Activated T-helper 2 cell treated with anti-CD3 and anti-CD28 coated beads, Interferon-gamma antibody, Interleukin-2, Interleukin-4, amounts not matched to agents 10 μg/mL and 5 μg/mL and 100 μg/mL, durations not matched to agents 14 hours and 24 hours and 36 hours (primary cell): ENCODE measurements at regions of chr10 and their contacts with region 1.

Region 1: GRCh38 chr10:102713814-102714620 is at the start of gene ARL3:
- DNase-seq: peak; percentile 96
- H3K4me3 Mint-ChIP-seq: peak within 1 kb of the TSS; percentile 92
- H3K27ac Mint-ChIP-seq: peak within 1 kb of the TSS; percentile 92
- H3K4me1 Mint-ChIP-seq: peaks cover 55% of the 10 kb centered on the region
- H3K27me3 Mint-ChIP-seq: no peaks in the 10 kb centered on the region
- total RNA-seq, gene ARL3: 11.1 and 12.2 TPM in 2 replicates

Region 2: DNA sequence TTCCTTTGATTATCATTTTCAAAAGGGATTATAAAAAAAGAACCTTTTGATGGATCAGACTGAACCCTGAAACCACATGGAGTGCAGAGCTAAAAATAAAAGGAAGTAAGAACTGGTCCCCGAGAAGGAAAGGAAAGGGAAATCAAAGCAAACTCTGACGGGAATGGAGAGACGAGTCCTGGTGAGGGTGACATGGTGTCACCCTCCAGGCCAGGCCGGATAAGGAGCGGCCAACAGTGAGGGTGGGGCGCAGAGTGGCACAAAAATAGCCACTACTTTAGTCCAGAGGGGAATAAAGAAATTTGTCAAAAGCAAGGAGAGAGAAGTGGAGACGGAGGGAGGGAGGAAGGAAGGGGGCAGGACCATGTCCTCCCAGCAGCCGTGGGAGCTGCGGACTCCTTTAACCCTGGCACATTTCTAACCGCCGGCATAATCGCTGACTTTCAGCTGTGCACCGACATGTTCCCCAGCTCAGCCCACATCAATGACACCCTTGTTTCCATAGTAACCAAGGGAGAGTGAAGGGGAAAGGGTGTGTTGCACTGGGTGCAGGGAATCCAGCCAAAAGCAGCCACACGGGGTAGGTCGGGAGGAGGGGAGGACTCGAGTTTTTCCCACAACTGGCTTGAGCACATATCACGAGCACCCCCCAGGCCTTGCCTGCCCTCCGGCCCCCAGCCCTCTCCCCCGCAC is 40.1 kb before region 1 on chr10:
- intact Hi-C with region 1: loop called (anchors 5 kb)
- DNase-seq: peak; percentile 66
- H3K4me3 Mint-ChIP-seq: peak overlapping the region; percentile 70
- H3K27ac Mint-ChIP-seq: peak overlapping the region; percentile 69
- H3K4me1 Mint-ChIP-seq: peaks cover 30% of the 10 kb centered on the region
- H3K27me3 Mint-ChIP-seq: no peaks in the 10 kb centered on the region

Region 3: GRCh38 chr10:102702742-102703141 is 11.3 kb before region 1 on chr10:
- intact Hi-C with region 1: loop called (anchors 1 kb)
- DNase-seq: no peak
- H3K4me3 Mint-ChIP-seq: no peak overlapping the region
- H3K27ac Mint-ChIP-seq: peak overlapping the region; percentile 46
- H3K4me1 Mint-ChIP-seq: peaks cover 21% of the 10 kb centered on the region
- H3K27me3 Mint-ChIP-seq: no peaks in the 10 kb centered on the region

Region 4: GRCh38 chr10:102743588-102744373 is 29.8 kb after region 1 on chr10 and contains the start of gene WBP1L:
- intact Hi-C with region 1: loop called (anchors 1 kb)
- DNase-seq: peak; percentile 94
- H3K4me3 Mint-ChIP-seq: peak within 1 kb of the TSS; percentile 89
- H3K27ac Mint-ChIP-seq: peak within 1 kb of the TSS; percentile 88
- H3K4me1 Mint-ChIP-seq: peaks cover 37% of the 10 kb centered on the region
- H3K27me3 Mint-ChIP-seq: no peaks in the 10 kb centered on the region
- total RNA-seq, gene WBP1L: 18.0 and 19.9 TPM in 2 replicates